H1 (cell line): ENCODE measurements at regions of chr2 and their contacts with region 1.

Region 1: GRCh38 chr2:53970724-53971602 is at the start of gene PSME4:
- DNase-seq: peak; percentile 76 to 96
- H3K4me3 ChIP-seq: peak within 1 kb of the TSS; percentile 94 to 97 (median 96)
- H3K27ac ChIP-seq: peak within 1 kb of the TSS; percentile 78
- H3K4me1 ChIP-seq: peaks cover 0 to 3% (median under 1%) of the 10 kb centered on the region in 4 experiments; a peak in 3 of 7 replicates
- H3K27me3 ChIP-seq: no peaks in the 10 kb centered on the region
- CTCF ChIP-seq: no peak
- EP300 ChIP-seq: no peak
- POLR2A ChIP-seq: peak; percentile 91 to 96
- RAD21 ChIP-seq: no peak
- total RNA-seq, gene PSME4: 104 and 116 TPM in 2 replicates

Region 2: DNA sequence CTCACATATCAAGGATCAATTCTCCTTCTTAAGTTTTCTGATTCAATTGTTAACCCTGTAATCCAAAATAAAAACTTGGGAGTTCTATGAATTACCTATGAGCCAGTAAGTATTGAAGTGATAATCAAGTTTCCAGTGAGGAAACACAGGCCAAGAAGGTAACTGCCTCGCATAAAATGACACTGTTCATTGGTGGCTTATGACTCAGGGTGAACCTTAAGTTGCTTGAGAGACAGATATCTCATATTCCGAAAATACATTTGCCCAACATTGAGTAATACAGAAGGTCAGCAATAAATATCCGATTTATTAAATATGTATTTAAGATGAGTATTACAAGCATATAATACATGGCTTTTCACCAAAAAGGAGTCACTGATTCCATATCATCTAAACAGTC is 32.1 kb before region 1 on chr2:
- CTCF ChIA-PET with region 1: no interaction called
- POLR2A ChIA-PET with region 1: no interaction called
- DNase-seq: no peak
- H3K4me3 ChIP-seq: no peak overlapping the region
- H3K27ac ChIP-seq: no peak overlapping the region
- H3K4me1 ChIP-seq: no peaks in the 10 kb centered on the region
- H3K27me3 ChIP-seq: peaks cover 0 to 2% (median 0%) of the 10 kb centered on the region in 4 experiments; a peak in 1 of 7 replicates
- CTCF ChIP-seq: no peak
- EP300 ChIP-seq: no peak
- POLR2A ChIP-seq: no peak
- RAD21 ChIP-seq: no peak

Region 3: DNA sequence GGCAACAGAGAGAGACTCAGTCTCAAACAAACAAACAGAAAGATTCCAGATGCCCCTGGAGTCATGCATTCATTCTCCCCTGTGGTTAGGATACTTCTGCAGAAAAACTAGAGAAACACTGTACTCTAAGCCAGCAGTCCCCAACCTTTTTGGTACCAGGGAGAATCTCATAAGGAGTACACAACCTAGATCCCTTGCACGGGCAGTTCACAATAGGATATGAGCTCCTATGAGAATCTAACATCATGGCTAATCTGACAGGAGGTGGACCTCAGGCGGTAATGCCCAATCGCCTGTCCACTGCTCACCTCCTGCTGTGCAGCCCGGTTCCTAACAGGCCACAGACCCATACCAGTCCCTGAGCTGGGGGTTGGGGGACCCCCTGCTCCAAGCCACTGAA is 18.4 kb before region 1 on chr2:
- CTCF ChIA-PET with region 1: interaction called, 4 read pairs
- POLR2A ChIA-PET with region 1: interaction called, 15 read pairs
- DNase-seq: no peak
- H3K4me3 ChIP-seq: no peak overlapping the region
- H3K27ac ChIP-seq: no peak overlapping the region
- H3K4me1 ChIP-seq: peaks cover 0 to 6% (median 4%) of the 10 kb centered on the region in 4 experiments; a peak in 4 of 7 replicates
- H3K27me3 ChIP-seq: no peaks in the 10 kb centered on the region
- CTCF ChIP-seq: no peak
- EP300 ChIP-seq: no peak
- POLR2A ChIP-seq: no peak
- RAD21 ChIP-seq: no peak

Region 4: DNA sequence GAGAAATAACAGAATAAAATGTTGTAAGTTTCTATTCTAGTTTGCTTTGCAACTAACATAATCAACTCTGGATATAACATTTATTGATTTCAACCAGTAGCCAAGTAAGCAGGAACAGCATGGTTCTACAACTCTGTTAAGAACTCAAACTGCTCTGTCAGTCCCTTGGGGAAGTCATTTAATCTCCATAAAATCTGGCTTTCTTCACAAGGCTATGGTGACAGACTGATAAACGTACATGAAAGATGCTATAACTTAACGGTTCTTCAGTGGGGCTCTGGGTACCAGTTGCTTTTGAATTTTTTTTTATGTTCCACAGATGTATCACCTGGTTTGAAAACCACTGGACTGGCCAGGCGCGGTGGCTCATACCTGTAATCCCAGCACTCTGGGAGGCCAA is 10.5 kb before region 1 on chr2:
- CTCF ChIA-PET with region 1: no interaction called
- POLR2A ChIA-PET with region 1: interaction called, 25 read pairs
- DNase-seq: no peak
- H3K4me3 ChIP-seq: no peak overlapping the region
- H3K27ac ChIP-seq: no peak overlapping the region
- H3K4me1 ChIP-seq: peaks cover 1 to 19% (median 12%) of the 10 kb centered on the region in 4 experiments; a peak in 6 of 7 replicates
- H3K27me3 ChIP-seq: no peaks in the 10 kb centered on the region
- CTCF ChIP-seq: no peak
- EP300 ChIP-seq: no peak
- POLR2A ChIP-seq: 0 out of 3 replicates have a peak, but pooled peaks of 1 of the 2 experiments have one; percentile 22
- RAD21 ChIP-seq: no peak